Activated CD8-positive, alpha-beta T cell treated with anti-CD3 and anti-CD28 coated beads, Interleukin-2, amount 10 ng/mL, durations not matched to agents 7 days and 5 days (primary cell): ENCODE measurements at regions of chr3 and their contacts with region 1.

Region 1: GRCh38 chr3:111547631-111548030 is 5.6 kb downstream of the CD96 start:
- DNase-seq: peak; percentile 79
- ATAC-seq: peak; percentile 71
- H3K4me3 Mint-ChIP-seq: no peak overlapping the region
- H3K27ac Mint-ChIP-seq: no peak overlapping the region
- H3K4me1 Mint-ChIP-seq: peaks cover 29% of the 10 kb centered on the region
- H3K27me3 Mint-ChIP-seq: no peaks in the 10 kb centered on the region

Region 2: DNA sequence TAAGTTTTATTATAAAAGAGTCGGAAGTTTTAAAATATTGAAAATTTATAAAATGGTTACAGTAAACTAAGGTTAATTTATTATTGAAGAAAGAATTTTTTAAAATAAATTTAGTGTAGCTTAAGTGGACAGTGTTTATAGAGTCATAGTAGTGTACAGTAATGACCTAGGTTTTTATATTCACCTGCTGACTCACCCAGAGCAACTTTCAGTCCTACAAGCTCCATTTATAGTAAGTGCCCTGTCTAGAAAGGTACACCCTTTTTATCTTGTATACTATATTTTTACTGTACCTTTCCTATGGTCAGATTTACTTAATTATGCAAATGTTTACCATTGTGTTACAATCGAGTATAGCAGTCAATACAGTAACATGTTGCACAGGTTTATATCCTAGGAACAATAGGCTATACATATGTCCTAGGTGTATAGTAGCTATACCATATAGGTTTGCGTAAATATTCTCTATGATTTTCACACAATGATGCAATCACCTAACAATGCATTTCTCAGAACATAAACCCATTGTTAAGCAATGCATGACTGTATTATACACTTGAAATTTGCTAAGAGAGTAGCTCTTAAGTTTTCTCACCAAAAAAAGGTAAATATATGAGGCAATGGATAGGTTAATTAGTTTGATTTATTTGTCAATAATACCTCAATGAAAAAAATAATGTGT is 112.5 kb before region 1 on chr3:
- CTCF ChIA-PET with region 1: no interaction called
- POLR2A ChIA-PET with region 1: no interaction called
- DNase-seq: no peak
- ATAC-seq: no peak
- H3K4me3 Mint-ChIP-seq: no peak overlapping the region
- H3K27ac Mint-ChIP-seq: no peak overlapping the region
- H3K4me1 Mint-ChIP-seq: no peaks in the 10 kb centered on the region
- H3K27me3 Mint-ChIP-seq: no peaks in the 10 kb centered on the region

Region 3: GRCh38 chr3:111473316-111473949 is 74.2 kb before region 1 on chr3:
- CTCF ChIA-PET with region 1: no interaction called
- POLR2A ChIA-PET with region 1: no interaction called
- DNase-seq: no peak
- ATAC-seq: no peak
- H3K4me3 Mint-ChIP-seq: no peak overlapping the region
- H3K27ac Mint-ChIP-seq: no peak overlapping the region
- H3K4me1 Mint-ChIP-seq: no peaks in the 10 kb centered on the region
- H3K27me3 Mint-ChIP-seq: peaks cover 2% of the 10 kb centered on the region

Region 4: GRCh38 chr3:111594205-111594604 is 46.6 kb after region 1 on chr3:
- CTCF ChIA-PET with region 1: interaction called, 11 read pairs
- POLR2A ChIA-PET with region 1: interaction called, 13 read pairs
- DNase-seq: no peak
- ATAC-seq: peak; percentile 48
- H3K4me3 Mint-ChIP-seq: peak overlapping the region; percentile 29
- H3K27ac Mint-ChIP-seq: peak overlapping the region; percentile 79
- H3K4me1 Mint-ChIP-seq: peaks cover 72% of the 10 kb centered on the region
- H3K27me3 Mint-ChIP-seq: no peaks in the 10 kb centered on the region

Region 5: GRCh38 chr3:111610189-111610588 is 62.6 kb after region 1 on chr3:
- CTCF ChIA-PET with region 1: interaction called, 46 read pairs
- POLR2A ChIA-PET with region 1: interaction called, 35 read pairs
- DNase-seq: peak; percentile 84
- ATAC-seq: peak; percentile 73
- H3K4me3 Mint-ChIP-seq: peak overlapping the region; percentile 57
- H3K27ac Mint-ChIP-seq: peak overlapping the region; percentile 94
- H3K4me1 Mint-ChIP-seq: peaks cover 95% of the 10 kb centered on the region
- H3K27me3 Mint-ChIP-seq: no peaks in the 10 kb centered on the region

Region 6: DNA sequence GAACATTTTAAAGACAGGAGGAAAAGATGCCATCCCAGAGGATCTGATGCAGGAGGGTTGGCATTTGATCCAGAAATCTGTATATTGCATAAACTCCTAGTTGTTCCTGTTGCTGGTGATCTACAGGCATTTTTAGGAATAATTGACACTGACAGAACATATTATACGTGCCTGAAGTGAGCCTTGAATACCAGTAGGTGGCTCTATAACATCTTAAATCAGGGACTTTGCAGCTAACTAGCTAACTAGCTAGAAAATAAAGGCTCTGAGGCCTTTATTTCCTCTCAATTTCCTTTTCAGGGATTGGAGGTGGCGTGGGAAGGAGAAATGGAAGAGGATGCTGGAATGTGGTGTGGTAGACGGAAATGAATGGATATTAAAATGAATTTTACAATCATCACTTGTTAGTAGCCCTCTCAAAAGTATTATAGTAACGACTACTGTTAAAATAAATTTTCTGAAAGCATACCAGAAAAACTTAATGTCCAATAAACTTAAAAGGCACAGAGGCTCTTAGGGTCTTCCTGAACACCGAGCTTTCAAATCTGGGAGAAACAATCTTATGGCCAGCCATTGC is 121.4 kb after region 1 on chr3:
- CTCF ChIA-PET with region 1: interaction called, 10 read pairs
- POLR2A ChIA-PET with region 1: interaction called, 4 read pairs
- DNase-seq: no peak
- ATAC-seq: peak; percentile 32
- H3K4me3 Mint-ChIP-seq: no peak overlapping the region
- H3K27ac Mint-ChIP-seq: peak overlapping the region; percentile 75
- H3K4me1 Mint-ChIP-seq: peaks cover 84% of the 10 kb centered on the region
- H3K27me3 Mint-ChIP-seq: no peaks in the 10 kb centered on the region

Region 7: DNA sequence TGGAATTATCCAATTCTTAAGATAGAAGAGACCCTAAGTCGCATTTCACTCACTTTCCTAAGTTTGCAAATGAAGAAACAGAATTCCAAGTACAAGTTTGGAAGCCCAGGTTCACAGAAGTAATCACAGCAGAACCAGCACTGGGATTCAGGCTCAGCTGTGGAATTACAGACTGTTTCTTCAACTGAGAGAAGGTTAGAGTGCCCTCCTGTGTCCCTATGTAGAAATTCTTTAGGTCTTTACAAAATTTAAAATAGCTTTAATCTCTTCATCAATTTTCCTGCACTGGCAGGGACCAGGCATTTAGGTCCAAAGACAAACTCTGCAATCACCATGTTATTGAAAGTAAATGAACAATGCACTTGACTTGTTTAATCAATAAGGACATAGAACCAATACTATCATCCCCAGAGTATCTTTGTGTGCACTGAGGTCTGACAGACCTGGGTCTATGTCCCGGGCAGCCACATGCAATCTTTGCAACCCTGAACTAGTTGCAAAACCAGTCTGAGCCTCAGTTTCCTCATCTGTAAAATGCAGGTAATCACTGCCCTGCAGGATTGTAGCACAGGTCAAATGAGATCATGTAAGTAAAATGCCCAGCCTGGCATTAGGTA is 143.8 kb after region 1 on chr3:
- CTCF ChIA-PET with region 1: interaction called, 14 read pairs
- POLR2A ChIA-PET with region 1: interaction called, 8 read pairs
- DNase-seq: no peak
- ATAC-seq: no peak
- H3K4me3 Mint-ChIP-seq: no peak overlapping the region
- H3K27ac Mint-ChIP-seq: peak overlapping the region; percentile 53
- H3K4me1 Mint-ChIP-seq: peaks cover 68% of the 10 kb centered on the region
- H3K27me3 Mint-ChIP-seq: no peaks in the 10 kb centered on the region

Region 8: GRCh38 chr3:111747490-111747889 is 199.9 kb after region 1 on chr3:
- CTCF ChIA-PET with region 1: no interaction called
- POLR2A ChIA-PET with region 1: no interaction called
- DNase-seq: no peak
- ATAC-seq: no peak
- H3K4me3 Mint-ChIP-seq: no peak overlapping the region
- H3K27ac Mint-ChIP-seq: no peak overlapping the region
- H3K4me1 Mint-ChIP-seq: no peaks in the 10 kb centered on the region
- H3K27me3 Mint-ChIP-seq: no peaks in the 10 kb centered on the region